GM12878 (cell line): ENCODE measurements at regions of chr3 and their contacts with region 1.

Region 1: DNA sequence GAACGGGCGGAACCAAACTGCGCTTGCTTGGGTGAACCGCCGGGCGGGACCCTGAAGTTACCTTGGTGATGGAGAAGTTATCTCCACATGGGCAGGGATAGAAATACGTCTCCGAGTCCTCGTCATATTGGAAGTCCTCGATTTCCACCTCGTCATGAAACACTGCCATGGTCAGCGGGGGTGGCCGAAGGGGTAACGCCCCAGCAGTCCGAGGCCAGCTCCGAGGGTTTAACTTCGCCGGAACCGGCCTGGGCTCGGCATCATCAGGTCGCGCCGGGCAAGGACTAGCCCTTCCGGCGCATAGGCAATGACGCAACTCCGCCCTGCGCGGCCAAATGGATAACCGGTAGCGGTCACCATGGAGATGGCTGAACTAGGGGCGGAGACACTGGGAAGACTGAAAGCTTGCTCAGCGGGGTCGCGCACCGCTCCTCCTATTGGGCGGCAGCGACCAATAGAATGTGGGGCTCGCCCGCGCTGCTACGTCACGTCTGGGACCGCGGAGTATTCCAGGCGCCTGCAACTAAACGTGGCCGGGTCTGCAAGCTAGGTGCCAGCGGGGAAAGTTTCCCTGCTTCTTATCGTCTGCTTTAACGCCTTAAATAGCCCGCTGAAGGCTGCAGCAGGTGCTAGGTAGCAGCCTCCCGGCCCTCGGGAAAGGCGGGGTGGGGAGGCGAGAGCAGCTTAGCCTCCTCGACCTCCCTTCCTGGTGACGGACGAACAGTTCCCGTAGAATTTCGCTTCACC is at the starts of genes DPH3 and OXNAD1:
- DNase-seq: peak; percentile 95
- ATAC-seq: peak; percentile 98
- H3K4me3 ChIP-seq: peak within 1 kb of the TSS; percentile 91
- H3K27ac ChIP-seq: peak within 1 kb of the TSS; percentile 86
- H3K4me1 ChIP-seq: peaks cover 3% of the 10 kb centered on the region
- H3K27me3 ChIP-seq: no peaks in the 10 kb centered on the region
- CTCF ChIP-seq: no peak
- EP300 ChIP-seq: no peak
- POLR2A ChIP-seq: peak; percentile 58
- RAD21 ChIP-seq: no peak
- polyA plus RNA-seq, gene DPH3: 67.1 to 71.8 TPM
- polyA plus RNA-seq, gene OXNAD1: 5.6 to 6.9 TPM

Region 2: GRCh38 chr3:16247276-16248061 is 17.4 kb before region 1 on chr3:
- CTCF ChIA-PET with region 1: interaction called, 35 read pairs
- POLR2A ChIA-PET with region 1: interaction called, 15 read pairs
- RAD21 ChIA-PET with region 1: interaction called, 8 read pairs
- SMC1A ChIA-PET with region 1: interaction called, 43 read pairs
- in situ Hi-C with region 1: no loop called
- intact Hi-C with region 1: no loop called
- DNase-seq: peak; percentile 43
- ATAC-seq: peak; percentile 94
- H3K4me3 ChIP-seq: no peak overlapping the region
- H3K27ac ChIP-seq: no peak overlapping the region
- H3K4me1 ChIP-seq: peaks cover 7% of the 10 kb centered on the region
- H3K27me3 ChIP-seq: no peaks in the 10 kb centered on the region
- CTCF ChIP-seq: peak; percentile 84 to 97 (median 90)
- EP300 ChIP-seq: peak; percentile 29 to 50; a peak in 1 of 4 replicates
- POLR2A ChIP-seq: no peak
- RAD21 ChIP-seq: peak; percentile 94

Region 3: DNA sequence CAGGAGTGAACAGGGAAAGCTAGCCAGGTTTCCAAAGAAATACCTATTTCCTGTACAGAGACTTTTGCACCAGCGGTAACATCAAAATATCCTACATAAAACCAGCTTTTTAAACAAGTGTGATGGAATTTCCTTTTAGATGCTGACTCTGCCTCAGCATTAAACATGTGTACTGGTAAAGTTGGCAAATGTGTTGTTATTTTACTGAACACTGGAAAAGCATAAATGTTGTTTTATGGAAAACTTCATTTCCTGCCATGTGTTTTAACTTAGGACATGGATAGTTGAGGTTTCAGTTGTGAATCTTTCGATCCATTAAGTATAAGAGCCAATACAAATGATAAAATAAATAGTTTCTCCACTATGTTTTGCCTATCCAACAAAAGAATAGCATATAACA is 15.8 kb after region 1 on chr3:
- CTCF ChIA-PET with region 1: interaction called, 16 read pairs
- POLR2A ChIA-PET with region 1: no interaction called
- RAD21 ChIA-PET with region 1: interaction called, 15 read pairs
- SMC1A ChIA-PET with region 1: interaction called, 21 read pairs
- in situ Hi-C with region 1: no loop called
- intact Hi-C with region 1: no loop called
- DNase-seq: no peak
- ATAC-seq: no peak
- H3K4me3 ChIP-seq: no peak overlapping the region
- H3K27ac ChIP-seq: no peak overlapping the region
- H3K4me1 ChIP-seq: no peaks in the 10 kb centered on the region
- H3K27me3 ChIP-seq: no peaks in the 10 kb centered on the region
- CTCF ChIP-seq: no peak
- EP300 ChIP-seq: no peak
- POLR2A ChIP-seq: no peak
- RAD21 ChIP-seq: no peak

Region 4: GRCh38 chr3:16338999-16339398 is 74.1 kb after region 1 on chr3:
- CTCF ChIA-PET with region 1: interaction called, 13 read pairs
- POLR2A ChIA-PET with region 1: no interaction called
- RAD21 ChIA-PET with region 1: no interaction called
- SMC1A ChIA-PET with region 1: no interaction called
- in situ Hi-C with region 1: no loop called
- intact Hi-C with region 1: no loop called
- DNase-seq: no peak
- ATAC-seq: peak; percentile 58
- H3K4me3 ChIP-seq: no peak overlapping the region
- H3K27ac ChIP-seq: peak overlapping the region; percentile 51; the same call in 1 of the 2 replicates
- H3K4me1 ChIP-seq: peaks cover 12% of the 10 kb centered on the region
- H3K27me3 ChIP-seq: no peaks in the 10 kb centered on the region
- CTCF ChIP-seq: no peak
- EP300 ChIP-seq: no peak
- POLR2A ChIP-seq: no peak
- RAD21 ChIP-seq: no peak

Region 5: GRCh38 chr3:16550676-16551341 is 285.9 kb after region 1 on chr3:
- CTCF ChIA-PET with region 1: interaction called, 62 read pairs
- POLR2A ChIA-PET with region 1: interaction called, 3 read pairs
- RAD21 ChIA-PET with region 1: interaction called, 12 read pairs
- SMC1A ChIA-PET with region 1: interaction called, 50 read pairs
- in situ Hi-C with region 1: no loop called
- intact Hi-C with region 1: loop called (anchors 1 kb)
- DNase-seq: peak; percentile 81
- ATAC-seq: peak; percentile 98
- H3K4me3 ChIP-seq: no peak overlapping the region
- H3K27ac ChIP-seq: 0 out of 2 replicates have a peak overlapping the region, but pooled peaks have one; percentile 9
- H3K4me1 ChIP-seq: peaks cover 13% of the 10 kb centered on the region
- H3K27me3 ChIP-seq: no peaks in the 10 kb centered on the region
- CTCF ChIP-seq: peak; percentile 83 to 94 (median 90)
- EP300 ChIP-seq: no peak
- POLR2A ChIP-seq: peak; percentile 25; the same call in 1 of the 2 replicates
- RAD21 ChIP-seq: peak; percentile 100